ENCODE measurements at regions of chr1 and their contacts with region 1.

Region 1: GRCh38 chr1:201559679-201560162 is 20.8 kb downstream of the NAV1 start:
- DNase-seq: peak; percentile 61 to 69
- ATAC-seq: peak; percentile 71 to 83
- H3K4me3 ChIP-seq: no peak overlapping the region
- H3K27ac ChIP-seq: no peak overlapping the region
- H3K4me1 ChIP-seq: peaks cover 8 to 25% of the 10 kb centered on the region in 2 donors
- H3K27me3 ChIP-seq: no peaks in the 10 kb centered on the region
- CTCF ChIP-seq: peak; percentile 91 to 96 (median 94)
- POLR2A ChIP-seq: no peak

Region 2: GRCh38 chr1:201578008-201578888 is 18.5 kb after region 1 on chr1:
- in situ Hi-C with region 1: no loop called
- intact Hi-C with region 1: no loop called
- DNase-seq: no peak
- ATAC-seq: no peak
- H3K4me3 ChIP-seq: no peak overlapping the region
- H3K27ac ChIP-seq: no peak overlapping the region
- H3K4me1 ChIP-seq: no peaks in the 10 kb centered on the region
- H3K27me3 ChIP-seq: no peaks in the 10 kb centered on the region
- CTCF ChIP-seq: no peak
- POLR2A ChIP-seq: no peak

Region 3: GRCh38 chr1:201703621-201704439 is 144.1 kb after region 1 on chr1:
- in situ Hi-C with region 1: loop called (anchors 5 kb)
- intact Hi-C with region 1: loop called (anchors 1 kb)
- DNase-seq: peak; percentile 67 to 70
- ATAC-seq: peak; percentile 75 to 82
- H3K4me3 ChIP-seq: no peak overlapping the region
- H3K27ac ChIP-seq: peak overlapping the region; percentile 19 to 56 (median 38)
- H3K4me1 ChIP-seq: peaks cover 20 to 21% of the 10 kb centered on the region in 2 donors
- H3K27me3 ChIP-seq: no peaks in the 10 kb centered on the region
- CTCF ChIP-seq: peak; percentile 87 to 98 (median 96)
- POLR2A ChIP-seq: no peak

Region 4: DNA sequence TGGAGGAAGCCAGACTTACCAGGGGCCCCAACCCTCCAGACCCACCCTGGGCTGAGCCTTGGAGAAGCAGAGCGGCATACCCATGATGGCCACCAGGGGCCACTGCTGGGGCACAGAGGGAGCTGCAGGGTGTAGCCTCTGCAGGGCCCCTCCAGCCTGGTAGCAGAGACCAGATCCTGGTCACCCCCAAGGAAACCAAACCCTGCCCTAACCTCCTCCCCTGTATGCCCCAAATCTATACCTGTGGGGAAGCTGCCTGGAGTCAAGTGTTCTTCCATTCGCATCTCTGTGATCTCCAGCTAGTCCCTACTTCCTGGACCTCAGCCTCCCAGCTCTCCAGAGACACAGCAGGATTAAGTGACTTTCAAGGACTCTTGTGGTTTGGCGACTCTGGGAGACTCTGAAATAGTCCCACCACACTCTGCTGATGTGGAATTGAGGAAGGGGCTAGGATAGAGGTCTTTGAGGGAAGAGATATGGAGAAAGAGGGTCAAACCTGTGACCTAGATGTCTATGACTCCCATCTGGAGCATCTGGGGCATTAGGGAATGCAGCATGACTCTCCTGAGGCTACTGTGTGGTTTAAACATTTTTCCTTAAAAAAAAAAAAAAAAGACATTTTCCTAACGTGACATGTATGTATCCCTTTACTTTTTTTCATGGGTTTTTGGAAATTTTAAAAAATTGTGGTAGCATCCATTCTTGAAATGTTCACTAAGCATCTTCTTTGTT is 150.0 kb after region 1 on chr1:
- in situ Hi-C with region 1: loop called (anchors 5 kb)
- intact Hi-C with region 1: loop called (anchors 1 kb)
- DNase-seq: peak; percentile 36 to 58
- ATAC-seq: peak in 1 of 2 donors; percentile 31
- H3K4me3 ChIP-seq: no peak overlapping the region
- H3K27ac ChIP-seq: peak overlapping the region in 2 of 4 donors; percentile 1 to 39
- H3K4me1 ChIP-seq: peaks cover 38 to 42% of the 10 kb centered on the region in 2 donors
- H3K27me3 ChIP-seq: no peaks in the 10 kb centered on the region
- CTCF ChIP-seq: peak; percentile 89 to 96 (median 93)
- POLR2A ChIP-seq: no peak

Region 5: DNA sequence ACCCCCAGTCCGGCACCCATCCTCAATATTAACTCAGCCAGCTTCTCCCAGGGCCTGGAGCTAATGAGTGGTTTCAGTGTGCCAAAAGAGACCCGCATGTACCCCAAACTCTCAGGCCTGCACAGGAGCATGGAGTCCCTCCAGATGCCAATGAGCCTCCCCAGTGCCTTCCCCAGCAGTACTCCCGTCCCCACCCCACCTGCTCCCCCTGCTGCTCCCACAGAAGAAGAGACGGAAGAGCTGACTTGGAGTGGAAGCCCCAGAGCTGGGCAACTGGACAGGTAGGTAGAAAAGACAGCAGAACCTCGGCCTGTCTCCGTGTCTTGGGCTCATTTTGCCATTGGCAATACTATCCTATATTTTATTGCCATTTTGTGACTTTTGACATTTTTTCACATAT is 223.9 kb after region 1 on chr1:
- in situ Hi-C with region 1: loop called in 1 of 4 experiments (anchors 5 kb)
- intact Hi-C with region 1: no loop called
- DNase-seq: no peak
- ATAC-seq: no peak
- H3K4me3 ChIP-seq: no peak overlapping the region
- H3K27ac ChIP-seq: no peak overlapping the region
- H3K4me1 ChIP-seq: peaks cover 0 to 3% of the 10 kb centered on the region in 2 donors
- H3K27me3 ChIP-seq: no peaks in the 10 kb centered on the region
- CTCF ChIP-seq: no peak
- POLR2A ChIP-seq: no peak

Region 6: DNA sequence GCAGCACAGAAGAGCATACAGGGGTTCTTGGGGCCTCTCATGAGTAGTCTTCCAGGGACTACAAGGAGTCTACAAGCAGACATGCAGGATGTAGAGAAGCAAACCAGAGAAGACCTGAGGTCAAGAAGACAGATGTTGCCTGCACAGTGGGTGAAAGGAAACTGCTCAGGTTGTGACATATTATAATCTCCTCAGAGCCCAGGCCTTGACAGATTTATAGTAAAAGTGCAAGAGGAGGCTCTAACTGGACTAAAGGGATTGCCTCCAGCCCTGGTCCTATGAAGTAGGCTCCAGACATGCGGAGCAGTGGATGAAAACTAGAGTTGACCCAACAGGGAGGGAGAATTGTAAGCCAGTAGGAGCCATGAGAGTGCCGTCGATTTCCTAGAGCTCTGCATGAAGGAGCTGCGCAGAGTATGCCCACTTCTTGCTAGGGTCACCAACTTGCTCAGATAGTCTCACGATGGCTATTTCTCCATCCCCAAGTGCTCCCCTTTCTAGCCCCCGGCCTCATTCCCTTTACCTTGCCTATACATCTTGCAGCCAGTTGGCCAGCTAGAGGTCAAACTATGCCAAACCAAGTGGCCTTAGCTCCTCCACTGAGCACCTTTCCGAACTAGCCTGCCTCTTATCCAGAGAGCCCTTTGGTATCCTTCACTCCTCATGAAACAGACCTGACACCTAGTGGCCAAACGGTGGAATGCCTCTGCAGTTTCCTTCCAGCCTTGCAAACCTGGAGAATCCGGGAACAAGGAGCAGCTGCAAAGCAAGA is 233.0 kb after region 1 on chr1:
- in situ Hi-C with region 1: loop called (anchors 5 to 10 kb)
- intact Hi-C with region 1: loop called (anchors 1 kb)
- DNase-seq: peak; percentile 52 to 73
- ATAC-seq: peak; percentile 93 to 94
- H3K4me3 ChIP-seq: no peak overlapping the region
- H3K27ac ChIP-seq: peak overlapping the region; percentile 49 to 73 (median 66)
- H3K4me1 ChIP-seq: peaks cover 30 to 38% of the 10 kb centered on the region in 2 donors
- H3K27me3 ChIP-seq: no peaks in the 10 kb centered on the region
- CTCF ChIP-seq: peak; percentile 93 to 97 (median 95)
- POLR2A ChIP-seq: no peak